CD4-positive, alpha-beta memory T cell (primary cell): ENCODE measurements at regions of chr3 and their contacts with region 1.

Region 1: GRCh38 chr3:193052354-193053045 is 134.8 kb upstream of the MB21D2 start:
- DNase-seq: no peak
- H3K4me3 ChIP-seq: no peak overlapping the region
- H3K4me3 Mint-ChIP-seq: no peak overlapping the region
- H3K27ac ChIP-seq: no peak overlapping the region
- H3K27ac Mint-ChIP-seq: no peak overlapping the region
- H3K4me1 ChIP-seq: no peaks in the 10 kb centered on the region
- H3K4me1 Mint-ChIP-seq: no peaks in the 10 kb centered on the region
- H3K27me3 ChIP-seq: no peaks in the 10 kb centered on the region
- H3K27me3 Mint-ChIP-seq: peaks cover 5% of the 10 kb centered on the region in 2 donors

Region 2: GRCh38 chr3:193040836-193041672 is 11.4 kb before region 1 on chr3:
- CTCF ChIA-PET with region 1: interaction called, 15 read pairs
- POLR2A ChIA-PET with region 1: no interaction called
- intact Hi-C with region 1: no loop called
- DNase-seq: peak; percentile 34 to 57 (median 51)
- H3K4me3 ChIP-seq: no peak overlapping the region
- H3K4me3 Mint-ChIP-seq: no peak overlapping the region
- H3K27ac ChIP-seq: no peak overlapping the region
- H3K27ac Mint-ChIP-seq: no peak overlapping the region
- H3K4me1 ChIP-seq: no peaks in the 10 kb centered on the region
- H3K4me1 Mint-ChIP-seq: peaks cover 0 to 1% (median 0%) of the 10 kb centered on the region in 4 donors
- H3K27me3 ChIP-seq: no peaks in the 10 kb centered on the region
- H3K27me3 Mint-ChIP-seq: peaks cover 0 to 1% of the 10 kb centered on the region in 2 donors